Aorta (tissue), 5 donors: ENCODE measurements at regions of chr14 and their contacts with region 1.

Region 1: GRCh38 chr14:75182841-75183624 is 6.6 kb upstream of the TMED10 start:
- DNase-seq: peak in 1 of 2 donors; percentile 56
- ATAC-seq: peak; percentile 67
- H3K4me3 ChIP-seq: no peak overlapping the region
- H3K27ac ChIP-seq: peak overlapping the region; percentile 93 to 96
- H3K4me1 ChIP-seq: no peaks in the 10 kb centered on the region
- H3K27me3 ChIP-seq: no peaks in the 10 kb centered on the region

Region 2: DNA sequence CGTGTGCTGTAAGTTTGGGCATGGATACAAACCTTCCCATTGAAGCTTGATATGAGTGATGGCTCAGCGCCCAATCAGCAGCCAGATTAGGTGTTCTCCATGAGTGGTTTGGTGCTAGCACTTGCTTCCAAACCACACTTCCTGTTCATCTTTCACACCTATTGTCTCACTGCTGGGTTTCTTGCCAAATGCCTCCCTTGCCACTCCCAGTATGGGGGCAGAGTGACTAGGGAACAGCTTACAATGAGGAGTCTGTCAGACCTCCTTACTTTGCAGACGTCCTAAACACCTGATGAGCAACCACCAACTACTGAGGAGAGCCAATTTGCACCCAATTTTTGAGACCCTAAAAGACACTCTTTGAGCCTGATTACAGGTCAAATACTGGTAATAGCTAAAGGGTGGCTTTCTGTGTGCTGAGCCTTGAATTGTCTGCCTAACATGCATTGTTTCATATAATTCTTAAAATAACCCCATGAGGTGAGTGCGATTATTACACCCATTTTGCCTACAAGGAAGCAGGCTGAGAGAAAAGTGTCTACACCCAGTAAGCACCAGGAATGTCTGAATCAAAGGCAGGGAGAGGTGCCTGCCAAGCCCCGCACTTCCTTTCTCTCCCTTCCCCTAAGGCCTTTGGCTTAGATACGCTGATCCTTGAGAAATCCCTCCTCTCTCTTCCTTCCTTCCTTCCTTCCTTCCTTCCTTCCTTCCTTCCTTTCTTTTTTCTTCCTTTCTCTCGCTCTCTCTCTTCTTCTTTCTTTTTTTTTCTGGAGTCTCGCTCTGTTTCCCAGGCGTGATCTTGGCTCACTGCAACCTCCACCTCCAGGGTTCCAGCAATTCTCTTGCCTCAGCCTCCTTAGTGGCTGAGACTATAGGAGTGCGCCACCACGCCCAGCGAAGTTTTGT is 47.4 kb after region 1 on chr14:
- intact Hi-C with region 1: loop called (anchors 5 kb)
- DNase-seq: no peak
- ATAC-seq: no peak
- H3K4me3 ChIP-seq: no peak overlapping the region
- H3K27ac ChIP-seq: no peak overlapping the region
- H3K4me1 ChIP-seq: no peaks in the 10 kb centered on the region
- H3K27me3 ChIP-seq: no peaks in the 10 kb centered on the region

Region 3: GRCh38 chr14:75258615-75259466 is 75.8 kb after region 1 on chr14:
- intact Hi-C with region 1: loop called in 1 of 2 experiments (anchors 5 kb)
- DNase-seq: peak; percentile 100
- ATAC-seq: peak; percentile 96
- H3K4me3 ChIP-seq: peak overlapping the region; percentile 0 to 15
- H3K27ac ChIP-seq: peak overlapping the region; percentile 73 to 96
- H3K4me1 ChIP-seq: no peaks in the 10 kb centered on the region
- H3K27me3 ChIP-seq: no peaks in the 10 kb centered on the region